Activated T-helper 2 cell treated with anti-CD3 and anti-CD28 coated beads, Interferon-gamma antibody, Interleukin-2, Interleukin-4, amounts not matched to agents 10 μg/mL and 5 μg/mL and 100 μg/mL, durations not matched to agents 14 hours and 24 hours and 36 hours (primary cell): ENCODE measurements at regions of chr2 and their contacts with region 1.

Region 1: DNA sequence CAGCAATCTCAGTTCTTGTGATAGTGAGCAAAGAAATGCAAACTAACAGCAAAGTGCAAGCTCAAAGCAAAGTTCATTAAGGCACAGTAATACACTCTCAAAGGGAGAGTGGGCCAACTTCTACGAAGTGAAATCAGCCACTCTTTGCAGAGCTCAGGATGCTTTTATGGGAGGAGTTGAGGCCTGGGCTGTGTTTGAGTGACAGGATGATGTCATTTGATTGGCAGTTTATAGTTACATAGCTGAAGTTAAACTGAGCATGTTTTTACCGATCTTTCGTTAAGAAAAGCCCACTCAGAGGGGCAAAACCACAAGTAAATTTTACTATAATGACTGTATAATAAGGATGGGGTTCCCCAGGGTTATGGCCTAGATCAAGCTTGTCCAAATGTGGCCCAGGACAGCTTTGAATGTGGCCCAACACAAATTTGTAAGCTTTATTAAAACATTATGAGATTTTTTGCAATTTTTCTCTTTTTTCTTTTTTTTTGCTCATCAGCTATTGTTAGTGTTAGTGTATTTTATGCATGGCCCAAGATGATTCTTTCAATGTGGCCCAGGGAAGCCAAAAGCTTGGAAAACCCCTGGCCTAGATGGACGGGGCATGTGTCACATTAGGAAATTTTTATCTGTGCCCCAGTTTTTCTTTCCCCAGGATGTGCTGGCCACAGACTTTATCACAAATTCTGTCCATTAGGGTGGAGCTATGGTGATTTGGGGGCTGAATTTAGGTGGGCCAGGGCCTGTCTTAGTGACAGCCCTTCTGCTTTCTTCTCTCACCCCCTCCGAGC is 8.3 kb upstream of the DNAH7 start:
- DNase-seq: no peak
- H3K4me3 Mint-ChIP-seq: no peak overlapping the region
- H3K27ac Mint-ChIP-seq: no peak overlapping the region
- H3K4me1 Mint-ChIP-seq: peaks cover 11% of the 10 kb centered on the region
- H3K27me3 Mint-ChIP-seq: no peaks in the 10 kb centered on the region

Region 2: DNA sequence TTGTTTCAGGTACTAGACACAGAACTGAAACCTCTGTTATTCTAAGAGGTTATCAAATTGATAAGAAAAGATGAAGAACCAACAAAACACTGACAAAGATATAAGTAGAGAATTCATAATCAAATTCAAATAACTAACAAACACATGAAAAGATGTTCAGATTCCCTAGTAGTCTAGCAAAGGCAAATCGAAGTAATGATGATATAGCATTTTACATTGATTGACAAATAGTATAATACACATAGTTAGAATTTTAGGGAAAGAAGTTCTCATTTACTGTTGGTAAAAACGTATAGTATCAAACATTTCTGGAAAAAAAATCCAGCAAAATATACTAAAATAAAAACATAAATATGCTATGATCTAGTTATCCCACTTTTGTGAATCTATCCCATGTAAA is 58.9 kb before region 1 on chr2:
- intact Hi-C with region 1: no loop called
- DNase-seq: no peak
- H3K4me3 Mint-ChIP-seq: no peak overlapping the region
- H3K27ac Mint-ChIP-seq: no peak overlapping the region
- H3K4me1 Mint-ChIP-seq: no peaks in the 10 kb centered on the region
- H3K27me3 Mint-ChIP-seq: no peaks in the 10 kb centered on the region

Region 3: GRCh38 chr2:196113061-196113974 is 36.3 kb after region 1 on chr2:
- intact Hi-C with region 1: loop called (anchors 5 kb)
- DNase-seq: no peak
- H3K4me3 Mint-ChIP-seq: no peak overlapping the region
- H3K27ac Mint-ChIP-seq: no peak overlapping the region
- H3K4me1 Mint-ChIP-seq: peaks cover 11% of the 10 kb centered on the region
- H3K27me3 Mint-ChIP-seq: no peaks in the 10 kb centered on the region

Region 4: DNA sequence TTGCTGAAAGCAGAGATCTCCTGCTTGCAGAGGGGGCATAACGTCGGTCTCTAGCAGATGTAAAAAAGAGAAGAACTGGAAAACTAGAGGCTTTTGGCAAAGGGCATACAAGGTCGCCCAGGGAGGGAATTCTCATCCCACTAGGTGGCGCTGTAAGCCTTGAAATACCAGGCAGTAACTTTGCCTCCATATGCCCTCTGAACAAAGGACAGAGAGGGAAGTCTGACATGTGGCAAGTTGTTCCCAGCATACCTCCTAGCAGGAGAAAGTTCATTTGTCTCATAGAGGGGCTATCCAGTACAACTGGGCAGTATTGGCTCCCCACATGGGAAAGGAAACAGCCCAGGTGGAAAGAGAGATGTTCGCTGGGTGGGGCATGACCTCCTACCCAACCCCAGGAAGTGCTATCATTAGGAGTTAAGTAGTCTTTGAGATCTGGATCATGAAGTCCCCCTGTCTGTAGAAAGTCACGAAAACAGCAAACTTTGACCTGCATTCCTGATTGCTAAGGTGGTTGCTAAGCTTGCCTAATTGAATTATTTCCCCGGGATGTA is 54.5 kb after region 1 on chr2:
- intact Hi-C with region 1: loop called (anchors 5 kb)
- DNase-seq: peak; percentile 40
- H3K4me3 Mint-ChIP-seq: no peak overlapping the region
- H3K27ac Mint-ChIP-seq: peak overlapping the region; percentile 51
- H3K4me1 Mint-ChIP-seq: peaks cover 2% of the 10 kb centered on the region
- H3K27me3 Mint-ChIP-seq: no peaks in the 10 kb centered on the region

Region 5: GRCh38 chr2:196277002-196277401 is 200.0 kb after region 1 on chr2:
- intact Hi-C with region 1: loop called (anchors 2 kb)
- DNase-seq: no peak
- H3K4me3 Mint-ChIP-seq: no peak overlapping the region
- H3K27ac Mint-ChIP-seq: no peak overlapping the region
- H3K4me1 Mint-ChIP-seq: peaks cover 45% of the 10 kb centered on the region
- H3K27me3 Mint-ChIP-seq: no peaks in the 10 kb centered on the region

Region 6: DNA sequence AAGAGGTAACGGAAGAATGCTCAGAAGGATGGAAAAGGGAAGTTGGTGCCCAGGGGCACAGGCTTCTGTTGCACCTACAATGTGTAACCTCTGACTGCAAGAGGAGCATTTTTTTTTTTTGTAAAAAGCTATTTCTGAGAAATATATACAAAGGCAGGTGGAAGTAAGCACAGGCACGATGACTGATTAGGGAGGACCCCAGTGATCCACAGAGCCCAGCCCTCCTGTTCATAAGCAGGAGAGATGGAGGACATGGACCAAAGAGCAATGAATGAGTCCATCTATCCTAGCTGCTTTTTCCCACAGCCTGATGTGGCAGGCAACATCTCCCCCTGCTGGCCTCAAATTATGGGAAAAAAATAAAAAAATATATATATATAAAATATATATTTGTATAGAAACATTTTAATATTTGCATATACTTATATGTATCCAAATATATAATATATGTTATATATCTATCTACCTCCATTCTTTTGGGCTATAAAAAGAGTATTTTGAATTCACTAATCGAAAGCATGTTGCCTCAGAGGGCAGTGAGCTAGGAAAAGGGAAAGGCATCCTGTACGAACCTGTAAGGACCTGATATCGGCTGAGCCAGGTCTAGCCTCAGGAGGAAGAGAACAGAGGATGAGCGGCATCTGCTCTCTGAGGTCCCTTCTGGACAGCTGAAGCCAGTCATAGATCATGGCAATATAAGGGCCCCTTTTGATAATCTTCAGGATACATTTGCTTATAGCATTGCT is 260.4 kb after region 1 on chr2:
- intact Hi-C with region 1: loop called (anchors 1 kb)
- DNase-seq: no peak
- H3K4me3 Mint-ChIP-seq: no peak overlapping the region
- H3K27ac Mint-ChIP-seq: no peak overlapping the region
- H3K4me1 Mint-ChIP-seq: peaks cover 4% of the 10 kb centered on the region
- H3K27me3 Mint-ChIP-seq: peaks cover 14% of the 10 kb centered on the region

Region 7: DNA sequence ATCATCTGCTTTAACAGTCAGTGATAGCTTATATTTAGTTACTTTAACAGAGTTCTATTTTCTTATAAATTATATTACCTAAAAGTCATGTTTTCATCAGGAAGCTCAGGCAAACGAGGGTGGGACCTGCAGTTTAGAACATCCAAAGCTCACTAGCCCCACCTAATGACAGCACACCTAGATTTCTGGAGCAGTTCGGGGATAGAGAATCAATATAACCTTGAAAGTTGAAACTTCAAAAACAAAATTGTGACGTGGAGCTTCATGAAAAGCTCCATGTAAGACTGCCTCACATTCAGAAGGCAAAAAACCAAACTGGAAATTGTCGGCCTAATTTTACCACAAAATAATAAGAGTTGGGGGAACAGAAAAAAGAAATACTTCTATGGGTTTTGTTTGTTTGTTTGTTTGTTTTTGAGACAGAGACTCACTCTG is 376.7 kb after region 1 on chr2:
- intact Hi-C with region 1: loop called (anchors 2 kb)
- DNase-seq: no peak
- H3K4me3 Mint-ChIP-seq: no peak overlapping the region
- H3K27ac Mint-ChIP-seq: no peak overlapping the region
- H3K4me1 Mint-ChIP-seq: peaks cover 2% of the 10 kb centered on the region
- H3K27me3 Mint-ChIP-seq: peaks cover 32% of the 10 kb centered on the region